RWPE1 (cell line): ENCODE measurements at regions of chr20 and their contacts with region 1.

Region 1: DNA sequence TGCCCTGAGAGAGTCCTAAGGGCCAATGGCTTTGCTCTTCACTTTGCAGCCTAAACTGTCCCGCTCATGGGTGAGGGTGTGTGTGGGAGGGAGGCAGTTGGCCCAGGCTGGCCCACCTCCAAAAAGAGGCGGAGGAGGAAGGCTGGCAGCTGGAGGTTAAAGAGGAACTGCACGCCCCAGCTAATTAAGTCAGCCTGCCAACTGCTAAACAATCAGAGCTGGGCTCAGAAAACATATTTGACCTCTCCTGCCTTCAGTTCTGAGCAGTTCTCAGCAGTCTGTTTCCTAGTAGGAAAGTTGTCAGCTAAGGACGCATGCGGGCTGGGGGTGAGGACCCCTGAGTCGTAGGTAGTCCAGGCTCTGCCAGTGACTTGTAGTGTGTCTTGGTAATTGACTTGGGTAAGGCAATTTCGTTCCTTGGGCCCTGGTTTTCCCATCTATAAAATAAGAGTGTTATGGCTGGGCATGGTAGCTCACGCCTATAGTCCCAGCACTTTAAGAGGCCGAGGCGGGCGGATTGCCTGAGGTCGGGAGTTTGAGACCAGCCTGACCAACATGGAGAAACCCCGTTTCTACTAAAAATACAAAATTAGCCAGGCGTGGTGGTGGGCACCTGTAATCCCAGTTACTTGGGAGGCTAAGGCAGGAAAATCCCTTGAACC is 17.0 kb downstream of the GSS start:
- DNase-seq: no peak
- H3K27ac ChIP-seq: peak overlapping the region; percentile 15
- CTCF ChIP-seq: no peak

Region 2: GRCh38 chr20:34904202-34904621 is 34.4 kb before region 1 on chr20:
- CTCF ChIA-PET with region 1: interaction called, 10 read pairs
- POLR2A ChIA-PET with region 1: no interaction called
- DNase-seq: no peak
- H3K27ac ChIP-seq: no peak overlapping the region
- CTCF ChIP-seq: no peak

Region 3: DNA sequence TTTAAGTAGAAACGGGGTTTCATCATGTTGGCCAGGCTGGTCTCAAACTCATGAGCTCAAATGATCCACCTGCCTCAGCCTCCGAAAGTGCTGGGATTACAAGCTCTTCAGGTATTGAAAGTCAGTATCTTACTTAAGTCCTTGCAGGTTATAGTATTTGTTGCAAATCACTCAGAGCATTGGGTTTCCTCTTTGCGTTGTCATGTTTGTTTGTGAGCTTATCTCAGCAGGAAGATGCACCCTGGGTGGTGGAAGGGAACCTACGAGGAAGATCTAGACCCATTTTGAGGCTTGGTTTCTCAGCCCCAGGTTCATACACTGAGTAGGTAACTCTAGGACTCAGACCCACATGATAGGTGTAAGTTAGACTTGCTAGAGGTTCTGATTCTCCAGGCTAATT is 35.6 kb after region 1 on chr20:
- CTCF ChIA-PET with region 1: no interaction called
- POLR2A ChIA-PET with region 1: interaction called, 13 read pairs
- DNase-seq: no peak
- H3K27ac ChIP-seq: no peak overlapping the region
- CTCF ChIP-seq: no peak